Panc1 (cell line): ENCODE measurements at regions of chr20 and their contacts with region 1.

Region 1: GRCh38 chr20:7859356-7859802 is 80.9 kb downstream of the HAO1 start:
- DNase-seq: peak; percentile 43
- ATAC-seq: peak; percentile 62; the same call in 1 of the 2 replicates
- H3K4me3 ChIP-seq: no peak overlapping the region
- H3K27ac ChIP-seq: no peak overlapping the region
- H3K4me1 ChIP-seq: no peaks in the 10 kb centered on the region
- H3K27me3 ChIP-seq: no peaks in the 10 kb centered on the region
- CTCF ChIP-seq: peak; percentile 66; the same call in 1 of the 2 replicates

Region 2: GRCh38 chr20:6142348-6142993 is 1716.9 kb before region 1 on chr20:
- CTCF ChIA-PET with region 1: no interaction called
- POLR2A ChIA-PET with region 1: no interaction called
- in situ Hi-C with region 1: no loop called
- intact Hi-C with region 1: loop called (anchors 10 kb)
- DNase-seq: peak; percentile 33
- ATAC-seq: peak; percentile 85
- H3K4me3 ChIP-seq: no peak overlapping the region
- H3K27ac ChIP-seq: no peak overlapping the region
- H3K4me1 ChIP-seq: no peaks in the 10 kb centered on the region
- H3K27me3 ChIP-seq: no peaks in the 10 kb centered on the region
- CTCF ChIP-seq: peak; percentile 86

Region 3: DNA sequence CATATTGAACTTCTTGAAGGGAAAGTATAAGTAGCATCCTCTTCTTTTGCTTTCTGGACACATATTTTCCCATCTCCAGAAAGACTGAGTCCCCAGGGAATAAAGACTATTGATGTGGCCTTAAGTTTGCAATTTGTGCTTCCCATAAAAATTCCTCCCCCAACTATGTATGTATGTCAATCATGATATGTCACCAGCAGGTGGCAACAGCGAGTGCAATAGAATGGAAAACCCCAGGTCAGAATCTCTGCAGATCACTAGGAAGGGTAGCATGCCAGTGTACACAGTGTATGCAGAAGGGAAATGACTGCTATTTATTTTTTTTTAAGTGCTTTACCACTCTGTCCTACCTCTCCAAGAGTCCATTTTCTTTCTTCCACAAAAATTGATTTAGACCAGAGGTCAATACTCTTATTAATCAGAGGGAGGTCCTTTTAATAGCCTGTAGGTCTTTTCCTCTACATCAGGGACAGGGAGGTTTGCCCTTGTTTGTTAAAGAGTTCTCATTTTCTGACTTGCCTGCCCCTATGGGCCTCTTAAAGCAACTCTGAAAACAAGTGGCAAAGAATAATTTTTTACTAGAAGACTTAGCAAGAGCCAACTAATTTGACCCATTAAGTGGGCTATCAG is 1030.5 kb before region 1 on chr20:
- CTCF ChIA-PET with region 1: no interaction called
- POLR2A ChIA-PET with region 1: no interaction called
- in situ Hi-C with region 1: no loop called
- intact Hi-C with region 1: loop called (anchors 2 kb)
- DNase-seq: peak; percentile 42
- ATAC-seq: peak; percentile 88
- H3K4me3 ChIP-seq: no peak overlapping the region
- H3K27ac ChIP-seq: no peak overlapping the region
- H3K4me1 ChIP-seq: no peaks in the 10 kb centered on the region
- H3K27me3 ChIP-seq: no peaks in the 10 kb centered on the region
- CTCF ChIP-seq: peak; percentile 73

Region 4: GRCh38 chr20:7375905-7376304 is 483.5 kb before region 1 on chr20:
- CTCF ChIA-PET with region 1: no interaction called
- POLR2A ChIA-PET with region 1: no interaction called
- in situ Hi-C with region 1: no loop called
- intact Hi-C with region 1: loop called (anchors 5 kb)
- DNase-seq: no peak
- ATAC-seq: no peak
- H3K4me3 ChIP-seq: no peak overlapping the region
- H3K27ac ChIP-seq: no peak overlapping the region
- H3K4me1 ChIP-seq: no peaks in the 10 kb centered on the region
- H3K27me3 ChIP-seq: no peaks in the 10 kb centered on the region
- CTCF ChIP-seq: peak; percentile 34; the same call in 1 of the 2 replicates

Region 5: GRCh38 chr20:7608250-7608649 is 251.1 kb before region 1 on chr20:
- CTCF ChIA-PET with region 1: no interaction called
- POLR2A ChIA-PET with region 1: no interaction called
- in situ Hi-C with region 1: no loop called
- intact Hi-C with region 1: no loop called
- DNase-seq: no peak
- ATAC-seq: no peak
- H3K4me3 ChIP-seq: no peak overlapping the region
- H3K27ac ChIP-seq: no peak overlapping the region
- H3K4me1 ChIP-seq: no peaks in the 10 kb centered on the region
- H3K27me3 ChIP-seq: no peaks in the 10 kb centered on the region
- CTCF ChIP-seq: no peak